ENCODE measurements at regions of chr1 and their contacts with region 1.

Region 1: DNA sequence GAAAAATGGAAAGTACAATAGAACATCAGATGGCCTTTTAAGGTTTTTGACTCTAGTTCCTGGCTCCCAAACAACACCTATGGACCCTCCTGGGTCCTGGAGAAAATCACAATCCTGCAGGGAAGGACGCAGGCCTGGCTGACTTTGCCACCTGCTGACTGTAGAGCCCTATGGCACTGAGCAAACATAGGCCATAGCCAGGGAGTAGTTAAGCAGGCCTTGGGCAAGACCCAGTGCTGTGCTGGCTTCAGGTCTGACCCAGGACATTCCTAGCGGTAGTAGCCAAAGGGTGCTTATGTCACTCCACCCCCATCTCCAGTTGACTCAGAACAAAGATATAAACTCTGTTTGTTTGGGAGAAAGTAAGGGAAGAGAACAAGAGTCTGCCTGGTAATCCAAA is 149.1 kb downstream of the SLC44A5 start:
- DNase-seq: no peak
- ATAC-seq: no peak

Region 2: DNA sequence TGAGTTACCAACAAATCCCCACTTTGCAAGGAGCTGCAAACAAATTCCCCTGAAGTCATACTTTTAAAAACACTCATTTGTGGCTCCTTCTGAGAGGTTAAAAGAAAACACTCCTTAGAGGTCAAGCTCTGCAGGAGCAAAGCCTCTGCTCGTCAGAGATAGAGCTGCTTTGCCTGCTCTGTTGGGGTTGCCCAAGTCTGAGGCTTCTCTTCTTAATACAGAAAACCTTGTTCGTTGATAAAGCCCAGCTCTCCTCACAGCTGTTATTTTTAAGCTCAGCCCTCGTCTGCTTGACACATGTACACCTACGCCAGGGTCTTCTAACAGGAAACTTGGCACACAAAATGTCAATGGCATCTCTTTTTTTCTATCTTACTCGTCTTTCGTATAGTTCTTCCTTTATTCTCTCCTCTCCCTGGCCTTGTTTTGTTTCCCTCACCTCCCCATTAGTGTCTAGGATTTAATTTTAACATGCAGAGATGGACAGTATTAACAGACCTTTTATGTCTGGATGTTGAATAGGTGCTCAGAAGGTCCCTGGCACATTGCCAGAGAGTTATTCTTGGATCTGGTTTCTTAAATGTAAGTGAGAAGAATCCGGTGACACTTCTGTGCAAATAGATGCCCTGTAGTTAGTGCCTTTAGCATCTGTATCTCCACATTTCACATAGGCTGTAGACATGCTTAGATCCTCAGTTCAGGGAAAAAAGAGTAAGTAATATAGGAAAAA is 1035.5 kb before region 1 on chr1:
- intact Hi-C with region 1: loop called (anchors 5 kb)
- DNase-seq: no peak
- ATAC-seq: no peak